ENCODE measurements at regions of chr12 and their contacts with region 1.

Region 1: GRCh38 chr12:59808317-59808910 is 212.6 kb downstream of the SLC16A7 start:
- DNase-seq: no peak
- ATAC-seq: peak; percentile 44

Region 2: DNA sequence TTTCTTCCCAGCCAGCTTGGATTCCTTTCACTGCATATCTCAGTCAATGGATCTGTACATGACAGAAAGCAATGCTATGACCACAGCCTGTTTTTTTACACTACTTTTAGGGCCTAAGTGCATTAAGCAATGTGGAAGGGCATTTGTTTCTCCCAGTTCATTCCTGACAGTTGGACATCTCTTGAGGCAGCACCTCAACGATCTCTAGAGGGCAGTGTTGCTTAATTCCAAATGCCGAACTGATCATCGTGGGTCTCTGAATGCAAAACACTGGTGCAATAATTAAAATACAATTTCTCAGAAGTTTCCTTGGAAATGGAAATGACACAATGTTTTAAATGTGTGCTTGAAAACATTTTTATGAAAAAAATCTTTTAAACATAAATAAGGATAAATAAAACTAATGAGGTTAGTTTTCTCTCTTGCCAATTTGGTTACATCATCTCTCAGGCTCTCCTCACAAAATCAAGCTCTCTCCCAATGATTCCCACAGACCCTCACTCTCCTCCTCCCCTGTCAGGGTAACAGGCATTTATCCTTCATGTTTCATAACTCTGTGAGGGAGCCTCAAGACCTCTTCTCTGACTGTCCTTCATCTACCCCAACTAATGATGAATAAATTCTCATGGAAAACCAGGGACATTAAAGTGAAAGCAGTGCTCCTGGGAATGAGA is 405.0 kb before region 1 on chr12:
- intact Hi-C with region 1: loop called in 1 of 2 experiments (anchors 5 kb)
- DNase-seq: peak in 1 of 2 donors; percentile 22
- ATAC-seq: peak; percentile 75